Activated CD8-positive, alpha-beta T cell treated with anti-CD3 and anti-CD28 coated beads, Interleukin-2, amount 10 ng/mL, durations not matched to agents 7 days and 5 days (primary cell): ENCODE measurements at regions of chr2 and their contacts with region 1.

Region 1: GRCh38 chr2:44361330-44362206 is at the starts of genes CAMKMT and PREPL:
- DNase-seq: peak; percentile 98
- ATAC-seq: peak; percentile 86
- H3K4me3 Mint-ChIP-seq: peak within 1 kb of the TSS; percentile 91
- H3K27ac Mint-ChIP-seq: peak within 1 kb of the TSS; percentile 100
- H3K4me1 Mint-ChIP-seq: peaks cover 32% of the 10 kb centered on the region
- H3K27me3 Mint-ChIP-seq: no peaks in the 10 kb centered on the region
- total RNA-seq, gene CAMKMT: 11.2 to 12.7 TPM
- total RNA-seq, gene PREPL: 19.5 to 21.0 TPM

Region 2: GRCh38 chr2:44167940-44168680 is 193.5 kb before region 1 on chr2:
- CTCF ChIA-PET with region 1: no interaction called
- POLR2A ChIA-PET with region 1: interaction called, 10 read pairs
- DNase-seq: peak; percentile 99
- ATAC-seq: peak; percentile 88
- H3K4me3 Mint-ChIP-seq: peak overlapping the region; percentile 96
- H3K27ac Mint-ChIP-seq: peak overlapping the region; percentile 98
- H3K4me1 Mint-ChIP-seq: peaks cover 23% of the 10 kb centered on the region
- H3K27me3 Mint-ChIP-seq: no peaks in the 10 kb centered on the region

Region 3: DNA sequence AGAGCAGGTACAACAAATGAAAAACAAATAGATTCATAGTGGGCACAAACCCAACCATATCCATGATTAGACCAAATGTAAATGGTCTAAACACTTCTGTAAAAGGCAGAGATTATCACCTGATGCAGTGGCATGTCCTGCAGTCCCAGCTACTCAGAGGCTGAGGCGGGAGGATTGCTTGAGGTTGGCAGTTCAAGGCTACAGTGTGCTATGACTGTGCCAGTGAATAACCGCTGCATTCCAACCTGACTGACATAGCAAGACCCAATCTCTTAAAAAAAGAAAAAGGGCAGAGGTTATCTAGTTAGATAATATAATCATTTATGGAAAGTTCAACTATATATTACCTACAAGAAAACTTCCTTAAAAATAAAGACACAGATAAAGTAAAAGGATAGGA is 107.5 kb before region 1 on chr2:
- CTCF ChIA-PET with region 1: no interaction called
- POLR2A ChIA-PET with region 1: no interaction called
- DNase-seq: no peak
- ATAC-seq: no peak
- H3K4me3 Mint-ChIP-seq: no peak overlapping the region
- H3K27ac Mint-ChIP-seq: no peak overlapping the region
- H3K4me1 Mint-ChIP-seq: no peaks in the 10 kb centered on the region
- H3K27me3 Mint-ChIP-seq: peaks cover 10% of the 10 kb centered on the region

Region 4: DNA sequence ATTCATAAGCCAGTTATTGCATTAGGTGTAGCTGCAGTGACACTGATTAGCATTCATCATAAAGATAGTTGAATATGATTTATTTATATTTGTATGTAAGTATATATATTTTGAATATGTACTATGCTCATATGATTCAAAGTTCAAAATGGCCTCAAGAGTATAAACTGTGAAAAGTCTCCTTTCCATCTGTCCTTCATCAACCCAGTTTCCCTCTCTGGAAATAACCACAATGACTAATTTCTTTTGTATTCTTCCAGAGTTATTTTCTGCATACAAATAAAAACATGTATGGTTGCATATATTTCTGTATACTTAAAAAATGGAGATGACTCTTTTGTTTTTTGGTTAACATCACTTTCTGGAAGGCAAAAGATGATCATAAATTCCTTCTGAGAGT is 95.4 kb after region 1 on chr2:
- CTCF ChIA-PET with region 1: no interaction called
- POLR2A ChIA-PET with region 1: no interaction called
- DNase-seq: no peak
- ATAC-seq: no peak
- H3K4me3 Mint-ChIP-seq: no peak overlapping the region
- H3K27ac Mint-ChIP-seq: no peak overlapping the region
- H3K4me1 Mint-ChIP-seq: no peaks in the 10 kb centered on the region
- H3K27me3 Mint-ChIP-seq: no peaks in the 10 kb centered on the region